ENCODE measurements at regions of chr11 and their contacts with region 1.

Region 1: GRCh38 chr11:102485095-102485722 is 32.6 kb upstream of the TMEM123 start:
- DNase-seq: no peak
- ATAC-seq: no peak
- H3K4me3 ChIP-seq: no peak overlapping the region
- H3K4me3 Mint-ChIP-seq: no peak overlapping the region
- H3K27ac ChIP-seq: no peak overlapping the region
- H3K27ac Mint-ChIP-seq: no peak overlapping the region
- H3K4me1 ChIP-seq: peaks cover 0 to 7% of the 10 kb centered on the region in 2 donors
- H3K4me1 Mint-ChIP-seq: peaks cover 3 to 36% (median 19%) of the 10 kb centered on the region in 7 donors
- H3K27me3 ChIP-seq: no peaks in the 10 kb centered on the region
- H3K27me3 Mint-ChIP-seq: no peaks in the 10 kb centered on the region

Region 2: GRCh38 chr11:102470251-102470650 is 15.0 kb before region 1 on chr11:
- CTCF ChIA-PET with region 1: no interaction called
- POLR2A ChIA-PET with region 1: interaction called, 3 read pairs
- intact Hi-C with region 1: loop called in 1 of 2 experiments (anchors 2 kb)
- DNase-seq: peak in 7 of 9 donors; percentile 55 to 79 (median 74)
- ATAC-seq: peak; percentile 85
- H3K4me3 ChIP-seq: no peak overlapping the region
- H3K4me3 Mint-ChIP-seq: peak overlapping the region; percentile 46 to 85 (median 78)
- H3K27ac ChIP-seq: no peak overlapping the region
- H3K27ac Mint-ChIP-seq: peak overlapping the region; percentile 50 to 90 (median 68)
- H3K4me1 ChIP-seq: peaks cover 33 to 74% of the 10 kb centered on the region in 2 donors
- H3K4me1 Mint-ChIP-seq: peaks cover 55 to 95% (median 93%) of the 10 kb centered on the region in 7 donors
- H3K27me3 ChIP-seq: no peaks in the 10 kb centered on the region
- H3K27me3 Mint-ChIP-seq: no peaks in the 10 kb centered on the region

Region 3: GRCh38 chr11:102580185-102580951 is 95.2 kb after region 1 on chr11:
- CTCF ChIA-PET with region 1: no interaction called
- POLR2A ChIA-PET with region 1: no interaction called
- intact Hi-C with region 1: no loop called
- DNase-seq: no peak
- ATAC-seq: no peak
- H3K4me3 ChIP-seq: no peak overlapping the region
- H3K4me3 Mint-ChIP-seq: no peak overlapping the region
- H3K27ac ChIP-seq: no peak overlapping the region
- H3K27ac Mint-ChIP-seq: peak overlapping the region in 1 of 9 donors; percentile 51
- H3K4me1 ChIP-seq: peaks cover 16 to 19% of the 10 kb centered on the region in 2 donors
- H3K4me1 Mint-ChIP-seq: peaks cover 11 to 35% (median 27%) of the 10 kb centered on the region in 7 donors
- H3K27me3 ChIP-seq: no peaks in the 10 kb centered on the region
- H3K27me3 Mint-ChIP-seq: no peaks in the 10 kb centered on the region